ENCODE measurements at regions of chrX and their contacts with region 1.

Region 1: GRCh38 chrX:9923357-9923756 is 43.8 kb upstream of the CLDN34 start:
- DNase-seq: no peak
- ATAC-seq: no peak

Region 2: DNA sequence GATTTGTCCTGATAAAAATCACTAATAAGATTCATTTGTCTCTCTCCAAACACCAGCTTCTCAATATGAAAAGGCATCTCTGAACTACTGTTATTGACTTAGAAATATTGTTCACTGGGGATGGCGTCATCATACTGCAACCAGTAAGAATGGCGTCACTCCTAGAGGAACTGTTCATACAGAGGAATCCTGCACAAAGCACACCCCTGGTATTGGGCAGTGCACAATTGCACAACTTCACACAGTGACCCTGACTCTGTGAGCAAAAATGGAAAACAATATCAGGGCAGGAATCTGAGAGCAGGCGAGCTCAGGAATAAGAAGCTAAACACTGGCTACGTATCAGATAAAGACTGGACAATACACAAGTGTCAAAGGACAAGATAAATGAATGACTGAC is 1929.5 kb before region 1 on chrX:
- intact Hi-C with region 1: loop called (anchors 5 kb)
- DNase-seq: no peak
- ATAC-seq: no peak

Measured in sciatic nerve (tissue), 2 donors.